ENCODE measurements at regions of chr2 and their contacts with region 1.

Region 1: GRCh38 chr2:226649871-226650660 is 149.6 kb downstream of the IRS1 start:
- DNase-seq: peak; percentile 97
- ATAC-seq: peak; percentile 71
- H3K4me3 ChIP-seq: peak overlapping the region in 1 of 2 experiments; percentile 8; a peak in 1 of 4 replicates
- H3K27ac ChIP-seq: peak overlapping the region; percentile 98
- H3K4me1 ChIP-seq: peaks cover 57 to 93% of the 10 kb centered on the region in 2 experiments
- H3K27me3 ChIP-seq: no peaks in the 10 kb centered on the region
- CTCF ChIP-seq: no peak
- POLR2A ChIP-seq: no peak
- RAD21 ChIP-seq: no peak

Region 2: GRCh38 chr2:226118471-226119430 is 531.3 kb before region 1 on chr2:
- CTCF ChIA-PET with region 1: no interaction called
- POLR2A ChIA-PET with region 1: interaction called, 11 read pairs
- RAD21 ChIA-PET with region 1: no interaction called
- intact Hi-C with region 1: loop called (anchors 1 kb)
- DNase-seq: peak; percentile 89
- ATAC-seq: peak; percentile 63
- H3K4me3 ChIP-seq: no peak overlapping the region
- H3K27ac ChIP-seq: peak overlapping the region; percentile 95
- H3K4me1 ChIP-seq: peaks cover 85 to 97% of the 10 kb centered on the region in 2 experiments
- H3K27me3 ChIP-seq: no peaks in the 10 kb centered on the region
- CTCF ChIP-seq: no peak
- POLR2A ChIP-seq: no peak
- RAD21 ChIP-seq: peak; percentile 38

Region 3: DNA sequence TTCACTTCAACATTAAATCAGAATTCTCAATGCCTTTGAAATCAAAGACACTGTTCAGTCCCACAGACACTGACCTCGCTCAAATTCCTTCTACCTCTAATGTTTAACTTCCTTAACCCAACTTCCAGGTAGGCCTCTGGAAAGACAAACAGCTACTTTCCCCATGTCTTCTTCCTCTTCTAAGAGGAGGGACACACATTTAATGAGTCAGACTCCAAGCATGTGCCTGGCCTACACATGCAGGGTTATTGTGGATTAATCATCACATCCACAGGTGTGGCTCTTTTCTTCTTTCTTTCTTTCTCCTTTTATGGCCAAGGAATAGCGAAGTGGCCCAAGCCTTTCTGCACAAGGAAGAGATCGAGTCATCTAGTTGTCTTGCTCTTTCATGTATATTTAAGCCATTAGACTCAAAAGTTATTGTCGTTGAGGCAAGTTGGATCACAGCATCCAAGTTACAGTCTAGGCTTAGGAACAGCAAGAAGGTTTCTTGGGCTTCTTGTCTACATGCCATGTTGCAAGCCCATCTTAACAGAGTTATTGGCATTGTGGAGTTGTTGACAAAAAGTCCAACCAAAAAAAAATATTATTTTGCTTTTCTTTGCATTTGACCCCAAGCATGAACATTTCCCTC is 238.2 kb before region 1 on chr2:
- CTCF ChIA-PET with region 1: no interaction called
- POLR2A ChIA-PET with region 1: no interaction called
- RAD21 ChIA-PET with region 1: no interaction called
- intact Hi-C with region 1: loop called (anchors 5 kb)
- DNase-seq: peak; percentile 93
- ATAC-seq: peak; percentile 93
- H3K4me3 ChIP-seq: no peak overlapping the region
- H3K27ac ChIP-seq: peak overlapping the region; percentile 96
- H3K4me1 ChIP-seq: peaks cover 25 to 51% of the 10 kb centered on the region in 2 experiments
- H3K27me3 ChIP-seq: no peaks in the 10 kb centered on the region
- CTCF ChIP-seq: no peak
- POLR2A ChIP-seq: no peak
- RAD21 ChIP-seq: peak; percentile 40

Region 4: GRCh38 chr2:226661789-226662545 is 11.9 kb after region 1 on chr2:
- CTCF ChIA-PET with region 1: no interaction called
- POLR2A ChIA-PET with region 1: interaction called, 10 read pairs
- RAD21 ChIA-PET with region 1: no interaction called
- intact Hi-C with region 1: no loop called
- DNase-seq: peak; percentile 88
- ATAC-seq: peak; percentile 78
- H3K4me3 ChIP-seq: peak overlapping the region; percentile 26 to 35
- H3K27ac ChIP-seq: peak overlapping the region; percentile 98
- H3K4me1 ChIP-seq: peaks cover 90 to 99% of the 10 kb centered on the region in 2 experiments
- H3K27me3 ChIP-seq: no peaks in the 10 kb centered on the region
- CTCF ChIP-seq: no peak
- POLR2A ChIP-seq: no peak
- RAD21 ChIP-seq: no peak

Region 5: DNA sequence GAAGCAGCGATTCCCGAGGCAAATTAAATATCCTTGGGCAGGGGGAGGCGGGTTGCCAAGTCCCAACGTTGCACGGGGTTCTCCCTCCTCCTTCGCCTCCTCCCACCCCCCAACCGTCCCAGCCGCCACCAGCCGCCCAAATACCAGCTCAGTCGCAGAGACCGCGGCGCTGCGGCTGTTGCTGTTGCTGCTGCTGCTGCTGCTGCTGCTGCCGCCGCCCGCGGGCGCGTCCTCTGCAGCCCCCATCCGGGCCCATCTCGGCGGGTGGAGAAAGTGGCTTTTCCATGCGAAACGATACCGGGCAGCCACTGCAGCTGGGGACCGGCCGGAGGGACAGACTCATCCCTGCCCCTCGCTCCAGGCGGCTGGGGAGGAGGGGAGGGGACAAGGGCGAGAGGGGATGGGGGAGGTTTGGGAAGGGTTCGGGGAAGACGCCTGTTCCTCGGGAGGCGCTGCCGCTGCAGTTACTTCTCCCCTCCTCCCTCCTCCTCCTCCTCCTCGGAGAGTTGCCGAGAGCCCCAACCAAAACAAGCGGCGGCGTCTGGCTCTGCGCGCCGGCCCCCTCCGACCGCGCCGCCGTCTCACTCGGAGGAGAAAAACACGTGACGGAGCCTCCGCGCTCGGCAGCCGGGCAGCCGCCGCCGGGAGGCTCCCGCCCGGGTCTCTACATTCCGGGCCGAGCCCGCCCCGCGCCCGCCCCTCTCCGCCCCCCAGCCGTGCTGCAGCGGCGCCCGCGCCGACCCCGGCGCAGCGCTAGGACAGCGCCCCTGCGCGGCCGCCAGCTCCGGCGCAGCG is 149.3 kb after region 1 on chr2 and contains the start of gene IRS1:
- CTCF ChIA-PET with region 1: interaction called, 6 read pairs
- POLR2A ChIA-PET with region 1: interaction called, 11 read pairs
- RAD21 ChIA-PET with region 1: interaction called, 4 to 8 read pairs
- intact Hi-C with region 1: loop called (anchors 2 kb)
- DNase-seq: peak; percentile 32
- ATAC-seq: peak; percentile 71
- H3K4me3 ChIP-seq: peak within 1 kb of the TSS; percentile 55 to 71
- H3K27ac ChIP-seq: peak within 1 kb of the TSS; percentile 88
- H3K4me1 ChIP-seq: peaks cover 31 to 89% of the 10 kb centered on the region in 2 experiments; a peak in 3 of 4 replicates
- H3K27me3 ChIP-seq: no peaks in the 10 kb centered on the region
- CTCF ChIP-seq: peak in 1 of 3 experiments; percentile 26; a peak in 3 of 6 replicates
- POLR2A ChIP-seq: no peak
- RAD21 ChIP-seq: no peak
- total RNA-seq, gene IRS1: 88.8 TPM

Measured in HCT116 (cell line).